GM12878 (cell line): ENCODE measurements at regions of chr1 and their contacts with region 1.

Region 1: GRCh38 chr1:161305867-161306519 is 3.8 kb downstream of the MPZ start:
- DNase-seq: peak; percentile 65
- ATAC-seq: peak; percentile 92
- H3K4me3 ChIP-seq: peak overlapping the region; percentile 94
- H3K27ac ChIP-seq: peak overlapping the region; percentile 13; the same call in 1 of the 2 replicates
- H3K4me1 ChIP-seq: peaks cover 12% of the 10 kb centered on the region
- H3K27me3 ChIP-seq: no peaks in the 10 kb centered on the region
- CTCF ChIP-seq: peak; percentile 41 to 51 (median 51); a peak in 5 of 6 replicates
- EP300 ChIP-seq: no peak
- POLR2A ChIP-seq: peak; percentile 77
- RAD21 ChIP-seq: peak; percentile 38; the same call in 1 of the 2 replicates

Region 2: GRCh38 chr1:161367684-161368400 is 61.8 kb after region 1 on chr1 and contains the start of gene CFAP126:
- CTCF ChIA-PET with region 1: interaction called, 12 read pairs
- POLR2A ChIA-PET with region 1: no interaction called
- RAD21 ChIA-PET with region 1: interaction called, 3 read pairs
- SMC1A ChIA-PET with region 1: interaction called, 3 read pairs
- in situ Hi-C with region 1: no loop called
- intact Hi-C with region 1: no loop called
- DNase-seq: peak; percentile 35
- ATAC-seq: peak; percentile 100
- H3K4me3 ChIP-seq: no peak within 1 kb of the TSS
- H3K27ac ChIP-seq: no peak within 1 kb of the TSS; the same call in 1 of the 2 replicates
- H3K4me1 ChIP-seq: no peaks in the 10 kb centered on the region; the same call in 1 of the 2 replicates
- H3K27me3 ChIP-seq: no peaks in the 10 kb centered on the region
- CTCF ChIP-seq: peak in 2 of 3 experiments; percentile 19 to 49; a peak in 2 of 6 replicates
- EP300 ChIP-seq: no peak
- POLR2A ChIP-seq: no peak
- RAD21 ChIP-seq: peak; percentile 48
- polyA plus RNA-seq, gene CFAP126: not detected